Endothelial cell of umbilical vein (primary cell): ENCODE measurements at regions of chr4 and their contacts with region 1.

Region 1: DNA sequence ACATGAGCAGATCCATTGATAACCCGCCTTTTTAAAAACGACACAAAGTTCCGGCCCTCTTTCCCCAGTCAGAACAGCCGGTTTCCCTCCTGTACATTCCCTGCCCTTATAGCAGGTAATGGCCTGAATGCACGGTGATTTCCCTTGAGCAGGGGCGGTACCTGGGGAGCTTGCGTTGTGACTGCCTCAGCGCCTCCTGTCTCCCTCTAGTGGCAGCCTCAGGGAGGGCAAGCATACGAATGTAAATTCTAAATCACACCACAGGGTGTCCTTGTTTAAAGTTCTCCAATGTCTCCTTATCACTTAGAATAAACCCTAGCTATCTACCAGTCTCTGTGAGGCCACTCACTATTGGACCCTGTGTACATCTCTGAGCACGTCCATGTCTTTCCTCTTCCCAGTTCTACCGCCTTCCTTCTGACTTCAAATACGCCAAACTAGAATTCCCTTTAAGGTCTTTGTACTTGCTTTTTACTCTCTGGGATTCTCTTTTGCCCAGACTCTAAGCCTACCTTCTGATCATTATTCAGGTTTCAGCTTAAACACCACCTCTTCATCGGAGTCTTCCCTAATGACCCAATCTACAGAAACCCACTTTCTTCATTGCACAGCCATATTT is 18.4 kb upstream of the LDB2 start:
- DNase-seq: peak; percentile 74
- H3K4me3 ChIP-seq: no peak overlapping the region
- H3K27ac ChIP-seq: no peak overlapping the region
- H3K4me1 ChIP-seq: peaks cover 9% of the 10 kb centered on the region
- H3K27me3 ChIP-seq: no peaks in the 10 kb centered on the region
- CTCF ChIP-seq: peak; percentile 87 to 93
- POLR2A ChIP-seq: no peak

Region 2: DNA sequence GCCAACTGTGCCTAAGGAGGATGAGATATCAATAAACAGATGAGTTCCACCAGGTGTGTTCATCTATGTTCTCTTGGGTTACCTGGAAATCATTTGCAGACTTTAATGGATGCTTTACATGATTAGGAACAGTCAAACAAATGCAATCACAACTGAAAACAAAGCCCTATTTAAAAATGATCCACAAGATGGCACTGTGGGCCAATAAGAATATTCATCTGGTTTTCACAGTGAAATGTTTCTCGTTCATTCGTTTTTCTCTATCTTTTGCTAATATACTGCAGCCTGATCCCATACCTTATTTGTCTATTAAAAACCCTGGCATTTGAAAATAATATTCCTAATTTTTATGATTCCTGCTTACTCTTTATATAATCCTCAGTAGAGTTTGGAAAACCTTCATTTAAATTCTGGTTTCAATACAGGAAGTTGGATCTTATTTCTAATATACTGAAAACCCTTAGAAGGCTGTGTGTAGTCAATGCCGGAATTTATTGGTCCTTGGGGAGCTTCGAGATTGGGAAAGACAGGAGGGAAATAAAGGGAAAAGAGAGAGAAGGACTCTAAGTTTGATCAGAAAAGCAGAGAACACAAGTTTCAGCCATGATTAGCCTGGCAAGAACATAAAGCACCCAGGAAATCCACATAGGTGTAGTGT is 626.8 kb before region 1 on chr4:
- CTCF ChIA-PET with region 1: interaction called, 3 read pairs
- POLR2A ChIA-PET with region 1: no interaction called
- dilution Hi-C with region 1: no loop called
- intact Hi-C with region 1: loop called (anchors 5 kb)
- DNase-seq: peak; percentile 69
- H3K4me3 ChIP-seq: no peak overlapping the region
- H3K27ac ChIP-seq: no peak overlapping the region
- H3K4me1 ChIP-seq: no peaks in the 10 kb centered on the region
- H3K27me3 ChIP-seq: peaks cover 12 to 18% of the 10 kb centered on the region in 2 experiments
- CTCF ChIP-seq: peak; percentile 27 to 41
- POLR2A ChIP-seq: no peak

Region 3: GRCh38 chr4:16772366-16772850 is 144.4 kb before region 1 on chr4:
- CTCF ChIA-PET with region 1: interaction called, 12 read pairs
- POLR2A ChIA-PET with region 1: no interaction called
- dilution Hi-C with region 1: no loop called
- intact Hi-C with region 1: no loop called
- DNase-seq: peak; percentile 77
- H3K4me3 ChIP-seq: no peak overlapping the region
- H3K27ac ChIP-seq: peak overlapping the region; percentile 81
- H3K4me1 ChIP-seq: peaks cover 21% of the 10 kb centered on the region
- H3K27me3 ChIP-seq: no peaks in the 10 kb centered on the region
- CTCF ChIP-seq: no peak
- POLR2A ChIP-seq: no peak

Region 4: GRCh38 chr4:16858275-16858752 is 58.5 kb before region 1 on chr4:
- CTCF ChIA-PET with region 1: interaction called, 8 read pairs
- POLR2A ChIA-PET with region 1: no interaction called
- dilution Hi-C with region 1: no loop called
- intact Hi-C with region 1: loop called (anchors 1 kb)
- DNase-seq: peak; percentile 98
- H3K4me3 ChIP-seq: peak overlapping the region in 1 of 3 experiments; percentile 18
- H3K27ac ChIP-seq: peak overlapping the region; percentile 79
- H3K4me1 ChIP-seq: peaks cover 64% of the 10 kb centered on the region
- H3K27me3 ChIP-seq: no peaks in the 10 kb centered on the region
- CTCF ChIP-seq: no peak
- POLR2A ChIP-seq: peak; percentile 65

Region 5: GRCh38 chr4:17027495-17027894 is 110.7 kb after region 1 on chr4:
- CTCF ChIA-PET with region 1: interaction called, 14 read pairs
- POLR2A ChIA-PET with region 1: no interaction called
- dilution Hi-C with region 1: no loop called
- intact Hi-C with region 1: no loop called
- DNase-seq: peak; percentile 87
- H3K4me3 ChIP-seq: no peak overlapping the region
- H3K27ac ChIP-seq: peak overlapping the region; percentile 48
- H3K4me1 ChIP-seq: peaks cover 33% of the 10 kb centered on the region
- H3K27me3 ChIP-seq: no peaks in the 10 kb centered on the region
- CTCF ChIP-seq: no peak
- POLR2A ChIP-seq: no peak

Region 6: DNA sequence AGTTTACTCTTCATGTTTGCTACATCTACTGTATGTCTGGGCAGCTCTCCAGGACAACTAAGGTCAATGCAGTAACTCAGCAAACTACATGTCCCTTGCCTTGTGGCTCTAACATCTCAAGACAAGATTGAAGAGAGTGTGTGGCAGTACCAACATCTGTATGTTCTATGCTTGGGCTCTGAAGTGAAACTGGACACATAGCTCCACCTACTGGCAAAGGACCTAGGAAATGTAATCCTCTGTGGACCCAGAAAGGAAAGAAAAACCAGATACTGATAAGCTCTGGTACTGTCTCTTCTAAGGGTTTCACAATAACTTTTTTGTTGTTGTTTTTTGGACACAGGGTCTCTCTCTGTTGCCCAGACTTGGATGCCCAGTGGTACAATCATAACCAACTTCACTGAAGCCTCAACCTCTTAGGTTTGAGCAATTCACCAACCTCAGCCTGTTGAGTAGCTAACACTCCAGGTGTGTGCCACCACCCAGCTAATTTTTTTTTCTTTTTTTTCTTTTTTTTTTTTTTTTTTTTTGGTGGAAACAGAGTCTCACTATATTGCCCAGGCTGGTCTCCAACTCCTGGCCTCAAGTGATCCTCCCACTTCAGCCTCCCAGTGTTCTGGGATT is 531.0 kb after region 1 on chr4:
- CTCF ChIA-PET with region 1: interaction called, 39 read pairs
- POLR2A ChIA-PET with region 1: no interaction called
- dilution Hi-C with region 1: no loop called
- intact Hi-C with region 1: loop called (anchors 5 kb)
- DNase-seq: peak; percentile 66
- H3K4me3 ChIP-seq: no peak overlapping the region
- H3K27ac ChIP-seq: no peak overlapping the region
- H3K4me1 ChIP-seq: peaks cover 9% of the 10 kb centered on the region
- H3K27me3 ChIP-seq: no peaks in the 10 kb centered on the region
- CTCF ChIP-seq: peak; percentile 58 to 62
- POLR2A ChIP-seq: no peak

Region 7: DNA sequence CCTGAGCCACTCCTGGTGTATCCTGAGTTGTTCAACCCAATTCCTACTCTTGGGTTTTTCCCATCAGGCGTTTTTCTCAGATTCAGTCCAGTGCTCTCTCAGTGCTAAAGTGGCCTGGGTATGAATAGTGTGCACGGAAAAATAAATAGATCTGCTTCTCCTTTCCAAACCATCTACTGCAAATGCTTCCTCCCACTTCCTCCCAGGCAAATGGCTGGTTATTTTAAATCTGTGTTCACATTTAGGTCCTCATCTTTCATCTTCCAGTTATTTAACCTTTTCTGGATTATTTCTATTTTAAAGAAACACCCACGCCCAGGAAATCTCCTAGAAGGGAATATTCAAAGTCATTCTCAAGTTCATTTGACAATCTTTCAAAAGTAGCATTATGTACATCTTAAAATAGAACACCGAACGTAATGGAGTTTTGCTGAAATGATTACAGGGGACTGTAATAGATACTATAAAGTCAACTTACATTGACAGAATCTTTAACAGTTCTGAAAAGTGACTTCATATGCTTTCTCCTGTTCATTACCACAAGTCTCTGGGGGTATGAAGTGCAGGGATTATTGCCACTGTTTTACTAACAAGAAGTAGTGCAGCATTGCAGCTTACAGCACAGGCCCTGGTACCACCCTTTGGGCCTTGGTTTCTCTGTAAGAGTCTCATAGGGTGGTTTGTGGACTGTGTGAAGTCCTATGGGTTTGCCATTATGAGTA is 763.9 kb after region 1 on chr4:
- CTCF ChIA-PET with region 1: no interaction called
- POLR2A ChIA-PET with region 1: no interaction called
- dilution Hi-C with region 1: no loop called
- intact Hi-C with region 1: no loop called
- DNase-seq: no peak
- H3K4me3 ChIP-seq: no peak overlapping the region
- H3K27ac ChIP-seq: no peak overlapping the region
- H3K4me1 ChIP-seq: no peaks in the 10 kb centered on the region
- H3K27me3 ChIP-seq: no peaks in the 10 kb centered on the region
- CTCF ChIP-seq: no peak
- POLR2A ChIP-seq: no peak